ENCODE measurements at regions of chr1 and their contacts with region 1.

Region 1: DNA sequence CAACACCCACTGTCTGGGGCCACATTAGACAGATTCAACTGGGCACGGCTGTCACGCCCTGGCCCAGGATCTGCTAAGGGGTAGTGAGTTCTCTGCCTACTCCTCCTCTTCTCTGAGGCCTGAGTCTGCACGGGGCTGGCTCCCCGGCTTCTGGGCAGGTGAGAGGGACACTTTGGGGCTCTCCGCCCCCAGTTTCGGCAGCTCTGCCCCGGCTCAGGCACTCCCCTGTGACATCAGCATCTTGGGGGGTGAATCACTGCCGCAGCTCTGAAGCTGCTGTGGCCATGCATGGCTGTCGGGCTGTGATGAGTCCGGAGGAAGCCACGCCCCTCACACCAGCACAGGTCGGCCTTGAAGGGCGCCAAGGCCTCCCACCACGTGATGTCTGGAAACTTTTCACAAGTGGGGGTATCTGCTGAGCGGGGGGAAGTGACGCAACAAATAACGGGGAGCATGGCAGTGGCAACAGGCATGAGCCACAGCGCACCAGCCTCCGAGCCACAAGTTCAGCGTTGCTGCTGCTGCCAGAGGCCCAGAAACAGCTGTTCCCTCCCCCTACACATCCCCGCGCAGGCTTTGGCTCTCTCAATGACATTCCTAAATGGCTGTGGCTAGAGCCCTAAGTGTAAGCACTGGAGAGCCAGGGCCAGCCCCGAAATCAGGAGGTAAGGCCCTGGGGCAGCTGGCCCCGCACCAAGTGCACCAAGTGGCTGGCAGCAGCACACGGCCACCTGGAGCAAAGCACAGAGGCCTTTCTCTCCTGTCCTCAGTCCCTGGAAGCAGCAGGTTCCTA is 26.3 kb downstream of the ZBTB17 start:
- DNase-seq: peak; percentile 45
- H3K4me3 Mint-ChIP-seq: peak overlapping the region; percentile 54
- H3K27ac Mint-ChIP-seq: peak overlapping the region; percentile 98
- H3K4me1 Mint-ChIP-seq: peaks cover 66% of the 10 kb centered on the region
- H3K27me3 Mint-ChIP-seq: no peaks in the 10 kb centered on the region

Region 2: GRCh38 chr1:15918962-15919715 is 30.5 kb before region 1 on chr1:
- intact Hi-C with region 1: loop called (anchors 1 kb)
- DNase-seq: peak; percentile 56
- H3K4me3 Mint-ChIP-seq: peak overlapping the region; percentile 55
- H3K27ac Mint-ChIP-seq: peak overlapping the region; percentile 69
- H3K4me1 Mint-ChIP-seq: peaks cover 36% of the 10 kb centered on the region
- H3K27me3 Mint-ChIP-seq: no peaks in the 10 kb centered on the region